Activated CD4-positive, alpha-beta T cell treated with anti-CD3 and anti-CD28 coated beads, Interleukin-2, amount 10 ng/mL, durations not matched to agents 24 days and 14 days (primary cell): ENCODE measurements at regions of chr6 and their contacts with region 1.

Region 1: DNA sequence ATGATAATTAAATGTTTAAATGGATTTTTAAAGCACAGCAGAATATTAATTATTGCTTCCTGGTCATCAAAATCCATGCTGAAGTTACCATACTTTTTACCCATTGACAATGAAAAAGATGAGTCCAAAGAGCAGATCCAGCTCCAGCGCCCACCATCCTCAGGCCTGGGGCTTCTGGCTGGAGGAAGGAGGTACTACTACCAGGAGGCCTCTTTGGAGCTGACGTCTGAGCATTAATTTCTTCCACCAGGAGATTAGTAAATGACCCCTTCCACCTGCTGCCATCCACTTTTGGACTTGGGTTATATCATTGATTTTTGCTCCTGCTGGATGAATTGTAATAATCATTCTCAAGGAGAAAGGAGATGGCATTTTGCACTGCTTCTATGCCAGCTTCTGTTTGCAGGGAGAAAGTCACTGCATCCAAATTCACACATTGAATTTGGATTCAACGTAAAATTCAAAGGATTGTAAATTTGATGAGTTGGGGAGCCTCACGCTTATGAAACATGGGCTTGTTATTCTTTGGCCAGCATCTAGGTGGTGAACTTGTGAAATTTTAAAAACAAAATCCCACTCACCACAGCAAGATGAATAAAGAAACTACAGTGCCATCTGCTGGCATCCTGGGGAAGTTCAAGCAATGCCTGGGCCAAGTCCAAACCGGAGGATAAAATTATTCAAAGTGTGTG is 121.8 kb downstream of the SASH1 start:
- DNase-seq: peak; percentile 86
- H3K4me3 Mint-ChIP-seq: no peak overlapping the region
- H3K27ac Mint-ChIP-seq: no peak overlapping the region
- H3K4me1 Mint-ChIP-seq: peaks cover 2% of the 10 kb centered on the region
- H3K27me3 Mint-ChIP-seq: peaks cover 32% of the 10 kb centered on the region

Region 2: DNA sequence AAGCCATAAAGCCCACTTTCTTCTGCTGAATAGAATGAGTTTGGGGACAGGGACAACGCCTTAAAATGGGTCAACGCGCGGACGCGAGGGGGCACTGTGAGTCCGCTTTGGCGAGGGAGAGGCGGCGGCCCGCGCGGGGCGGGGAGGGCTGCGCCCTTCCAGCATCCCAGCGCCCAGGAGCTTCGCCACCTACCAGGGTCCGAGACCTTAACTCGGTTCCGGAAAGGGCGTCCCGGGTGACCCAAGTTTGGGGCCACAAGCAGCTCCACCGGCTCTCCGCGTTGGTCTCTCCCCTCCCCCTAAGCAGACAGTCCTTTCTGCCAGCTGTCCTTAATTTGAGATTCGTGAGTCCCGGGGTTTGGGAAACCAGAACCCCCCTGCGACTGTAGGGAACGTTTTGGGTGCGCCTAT is 957.8 kb before region 1 on chr6:
- intact Hi-C with region 1: loop called (anchors 5 kb)
- DNase-seq: peak; percentile 79
- H3K4me3 Mint-ChIP-seq: peak overlapping the region; percentile 76
- H3K27ac Mint-ChIP-seq: no peak overlapping the region
- H3K4me1 Mint-ChIP-seq: peaks cover 11% of the 10 kb centered on the region
- H3K27me3 Mint-ChIP-seq: peaks cover 49% of the 10 kb centered on the region

Region 3: DNA sequence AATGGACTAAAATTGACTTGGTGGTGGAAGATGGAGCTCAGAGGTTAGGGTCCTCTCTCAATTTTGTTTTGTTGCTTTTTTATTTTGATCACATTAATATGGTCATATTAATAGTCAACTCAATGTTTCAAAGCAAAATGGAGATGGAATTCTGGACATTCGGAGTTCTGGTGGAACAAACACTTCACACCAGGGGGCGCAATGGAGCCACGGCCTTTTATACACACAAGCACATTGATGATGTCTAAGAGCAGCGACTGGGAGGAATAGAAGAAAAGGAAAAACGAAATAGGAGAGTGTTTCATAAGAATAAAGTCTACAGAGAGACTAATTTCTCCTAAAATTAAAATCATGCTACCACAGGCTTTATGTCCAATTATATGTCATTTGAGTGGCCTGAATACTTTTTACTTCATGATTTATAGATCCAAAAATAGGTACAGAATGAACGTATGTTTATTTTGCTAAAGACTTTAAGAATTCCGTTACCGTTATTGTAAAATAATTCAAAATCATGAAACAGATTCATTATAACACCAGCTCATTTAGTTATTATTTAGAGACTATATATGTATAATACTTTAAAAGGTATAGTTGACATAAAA is 319.4 kb before region 1 on chr6:
- intact Hi-C with region 1: loop called (anchors 10 kb)
- DNase-seq: peak; percentile 83
- H3K4me3 Mint-ChIP-seq: no peak overlapping the region
- H3K27ac Mint-ChIP-seq: no peak overlapping the region
- H3K4me1 Mint-ChIP-seq: peaks cover 8% of the 10 kb centered on the region
- H3K27me3 Mint-ChIP-seq: peaks cover 3% of the 10 kb centered on the region

Region 4: DNA sequence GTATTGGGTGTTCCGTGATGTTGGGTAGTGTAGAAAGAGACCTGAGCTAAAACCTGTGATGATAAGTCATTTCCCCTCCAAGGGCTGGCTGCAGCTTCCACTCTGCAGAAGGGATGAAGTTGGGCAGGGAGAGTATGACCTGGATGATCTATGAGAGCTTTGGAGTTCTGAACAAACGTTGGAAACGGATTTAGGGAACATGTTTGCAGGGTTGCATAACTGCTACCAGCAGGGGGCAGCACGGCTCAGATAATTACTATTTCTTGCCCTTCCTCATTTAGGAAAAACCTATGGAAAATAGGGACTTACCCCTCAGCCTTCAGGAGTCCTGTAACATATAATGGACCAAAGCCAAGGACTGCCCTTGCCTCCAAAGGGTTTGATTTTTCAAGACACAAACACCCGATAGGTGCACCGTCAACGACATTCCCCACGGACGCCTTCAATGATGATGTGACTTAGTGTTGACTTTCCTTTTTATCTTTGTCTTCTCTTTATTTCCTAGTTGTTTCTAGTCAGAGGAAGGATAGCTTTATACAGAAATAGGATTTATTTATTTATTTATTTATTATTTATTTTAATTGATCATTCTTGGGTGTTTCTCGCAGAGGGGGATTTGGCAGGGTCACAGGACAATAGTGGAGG is 286.8 kb before region 1 on chr6:
- intact Hi-C with region 1: loop called (anchors 1 kb)
- DNase-seq: peak; percentile 70
- H3K4me3 Mint-ChIP-seq: no peak overlapping the region
- H3K27ac Mint-ChIP-seq: no peak overlapping the region
- H3K4me1 Mint-ChIP-seq: no peaks in the 10 kb centered on the region
- H3K27me3 Mint-ChIP-seq: peaks cover 12% of the 10 kb centered on the region

Region 5: DNA sequence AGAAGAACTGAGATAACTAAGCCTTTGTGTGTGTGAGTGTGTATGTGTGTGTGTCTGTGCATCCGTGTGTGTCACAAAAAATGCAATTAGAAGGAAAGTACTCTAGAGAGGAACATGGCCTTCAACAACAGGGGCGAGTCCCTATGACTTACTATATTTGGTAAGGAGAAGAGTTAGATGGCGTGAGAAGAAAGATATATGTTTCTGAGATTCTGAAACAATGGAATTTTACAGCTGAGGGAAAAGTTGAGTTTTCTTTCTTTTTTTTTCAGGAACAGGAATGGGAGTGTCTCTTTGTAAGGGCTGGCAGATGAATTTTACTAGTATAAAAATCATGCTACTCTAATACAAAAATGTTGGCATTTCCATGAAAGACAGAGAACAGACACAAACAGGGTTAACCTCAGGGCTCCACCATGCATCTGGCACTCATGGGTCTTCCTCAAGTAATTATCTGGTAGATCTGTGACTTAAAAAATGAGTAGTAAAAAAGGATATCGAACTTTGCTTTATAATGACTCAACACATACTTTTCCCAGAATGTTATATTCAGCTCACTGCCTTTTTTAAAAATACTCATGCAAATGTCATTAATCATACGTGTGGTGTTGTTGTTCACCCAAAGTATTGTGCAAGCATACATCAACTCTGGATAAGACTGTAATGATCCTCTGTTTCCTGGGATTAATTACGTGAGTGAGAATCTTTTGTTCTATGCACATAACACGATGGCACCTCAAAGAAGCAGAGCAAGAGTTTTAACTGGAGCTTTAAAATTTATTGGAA is 134.7 kb before region 1 on chr6:
- intact Hi-C with region 1: no loop called
- DNase-seq: no peak
- H3K4me3 Mint-ChIP-seq: no peak overlapping the region
- H3K27ac Mint-ChIP-seq: no peak overlapping the region
- H3K4me1 Mint-ChIP-seq: no peaks in the 10 kb centered on the region
- H3K27me3 Mint-ChIP-seq: peaks cover 21% of the 10 kb centered on the region

Region 6: GRCh38 chr6:148342357-148343046 is 122.0 kb before region 1 on chr6 and contains the start of gene SASH1:
- intact Hi-C with region 1: loop called (anchors 10 kb)
- DNase-seq: peak; percentile 72
- H3K4me3 Mint-ChIP-seq: peak within 1 kb of the TSS; percentile 83
- H3K27ac Mint-ChIP-seq: peak within 1 kb of the TSS; percentile 16
- H3K4me1 Mint-ChIP-seq: peaks cover 12% of the 10 kb centered on the region
- H3K27me3 Mint-ChIP-seq: peaks cover 48% of the 10 kb centered on the region
- total RNA-seq, gene SASH1: 0.44 and 0.66 TPM in 2 replicates

Region 7: DNA sequence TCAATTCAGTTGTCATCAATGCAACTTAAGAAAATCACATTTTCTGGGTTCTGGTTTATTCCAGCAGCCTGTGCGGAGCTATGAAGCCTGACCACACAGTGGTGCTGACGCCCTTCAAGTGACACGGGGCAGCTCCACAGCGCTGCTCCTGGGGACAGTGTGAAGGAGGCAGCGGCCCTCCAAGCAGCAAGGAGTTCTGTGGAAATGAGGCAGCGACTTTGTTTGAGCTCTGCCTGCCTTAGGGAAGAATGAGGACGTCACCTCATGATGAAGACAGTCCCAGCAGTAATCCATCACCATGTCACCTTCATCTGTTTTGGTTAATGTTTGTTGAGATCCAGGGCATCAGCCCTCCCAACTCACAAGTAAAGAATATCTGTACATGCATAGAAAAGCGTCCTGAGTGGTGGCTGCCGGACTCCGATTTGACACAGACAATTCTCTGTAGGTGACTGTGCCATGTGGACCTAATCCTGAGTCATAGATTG is 113.8 kb after region 1 on chr6:
- intact Hi-C with region 1: no loop called
- DNase-seq: peak; percentile 79
- H3K4me3 Mint-ChIP-seq: no peak overlapping the region
- H3K27ac Mint-ChIP-seq: no peak overlapping the region
- H3K4me1 Mint-ChIP-seq: no peaks in the 10 kb centered on the region
- H3K27me3 Mint-ChIP-seq: peaks cover 38% of the 10 kb centered on the region